SK-N-SH (cell line): ENCODE measurements at regions of chr2 and their contacts with region 1.

Region 1: DNA sequence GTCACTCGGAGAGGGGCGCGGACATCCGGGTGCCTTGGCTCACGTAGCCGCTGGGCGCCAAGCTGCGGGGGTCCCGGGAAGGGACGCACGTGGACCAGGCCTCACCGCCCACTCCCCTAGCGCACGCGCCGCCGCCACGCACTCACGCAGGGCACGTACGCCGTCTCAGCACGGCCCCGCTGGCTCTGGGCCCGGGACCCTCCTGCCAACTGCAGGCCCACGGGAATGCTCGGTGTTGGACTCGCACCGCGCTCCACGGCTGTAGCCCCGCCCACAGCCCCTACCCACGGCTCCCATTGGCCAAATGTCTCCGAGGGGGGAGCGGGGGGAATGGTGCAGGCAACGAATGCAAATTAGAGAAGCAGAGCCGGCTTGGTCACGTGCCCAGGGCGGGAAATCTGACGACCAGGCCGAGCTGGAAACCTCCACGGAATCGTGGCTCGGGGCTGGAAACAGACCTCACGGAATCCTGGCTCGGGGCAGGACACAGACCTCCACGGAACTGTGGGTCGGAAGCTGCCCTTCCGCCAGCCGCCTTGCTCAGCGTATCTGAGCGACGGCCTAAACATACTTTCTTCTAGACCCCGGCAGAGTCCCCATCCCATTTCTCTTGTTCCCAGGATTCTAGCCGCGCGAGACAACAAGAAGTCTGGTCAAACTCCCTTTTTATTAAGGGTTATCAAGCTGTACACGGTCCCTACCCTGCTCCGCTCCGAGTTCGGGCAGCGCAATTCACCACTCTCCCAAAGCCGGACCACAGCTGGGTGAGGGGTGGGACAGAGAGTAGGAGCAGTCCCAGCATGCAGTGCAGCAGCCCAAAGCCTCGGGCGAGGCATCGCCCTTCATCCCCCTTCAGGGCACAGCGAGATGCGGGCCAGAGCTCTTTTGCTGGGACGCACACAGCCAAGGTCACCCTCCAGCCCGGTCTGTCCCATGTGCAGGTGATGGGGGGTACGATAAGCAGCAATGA is at the start of gene ABCB6:
- DNase-seq: peak; percentile 98
- H3K4me3 ChIP-seq: peak within 1 kb of the TSS; percentile 60 to 70
- H3K27ac ChIP-seq: peak within 1 kb of the TSS; percentile 87 to 99
- H3K4me1 ChIP-seq: peaks cover 5 to 30% of the 10 kb centered on the region in 2 experiments; a peak in 3 of 4 replicates
- H3K27me3 ChIP-seq: no peaks in the 10 kb centered on the region
- CTCF ChIP-seq: no peak
- EP300 ChIP-seq: no peak
- RAD21 ChIP-seq: no peak
- polyA plus RNA-seq, gene ABCB6: 26.5 and 27.4 TPM in 2 replicates

Region 2: DNA sequence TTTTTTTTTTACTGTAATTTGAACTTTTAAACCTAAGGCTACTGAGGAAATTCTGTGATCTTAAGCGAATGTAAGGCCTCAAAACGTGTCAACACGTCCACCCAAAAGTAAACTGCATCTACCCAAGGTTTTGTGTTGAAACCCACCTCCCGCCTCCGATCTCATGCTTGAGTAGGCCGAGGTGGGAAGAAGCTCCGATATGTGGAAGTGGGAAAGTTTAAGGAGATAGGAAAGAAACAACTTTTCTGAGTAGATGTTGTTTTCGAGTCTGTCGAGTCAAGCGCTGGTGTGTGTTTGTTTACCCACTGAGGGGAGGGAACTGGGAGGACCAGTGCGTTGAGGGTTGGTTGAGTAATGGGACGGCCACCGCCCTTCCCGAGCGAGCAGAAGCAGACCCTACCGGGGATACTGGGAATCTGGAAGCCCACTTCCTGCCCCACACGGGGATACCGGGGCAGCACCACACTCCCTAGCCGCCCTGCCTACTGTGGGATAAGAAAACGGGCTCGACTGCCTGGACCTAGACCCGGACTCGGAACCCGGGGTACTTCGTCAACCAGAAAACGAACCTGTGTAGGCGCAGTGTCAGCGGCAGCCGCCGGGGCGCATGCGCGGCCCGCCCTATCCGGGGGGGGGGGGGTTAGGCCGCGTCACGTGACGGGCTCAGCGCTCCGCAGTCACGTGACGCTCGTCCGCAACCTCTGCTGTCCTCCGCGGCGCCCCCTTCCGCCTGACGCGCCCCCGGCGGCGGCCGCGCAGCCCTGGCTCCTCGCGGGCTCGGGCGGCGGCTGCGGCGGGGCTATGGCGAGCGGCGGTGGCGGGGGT is 41.3 kb before region 1 on chr2 and contains the start of gene RETREG2:
- CTCF ChIA-PET with region 1: interaction called, 22 read pairs
- POLR2A ChIA-PET with region 1: interaction called, 13 read pairs
- DNase-seq: peak; percentile 99
- H3K4me3 ChIP-seq: peak within 1 kb of the TSS; percentile 80 to 89
- H3K27ac ChIP-seq: peak within 1 kb of the TSS; percentile 95 to 97
- H3K4me1 ChIP-seq: peaks cover 0 to 17% of the 10 kb centered on the region in 2 experiments; a peak in 2 of 4 replicates
- H3K27me3 ChIP-seq: no peaks in the 10 kb centered on the region
- CTCF ChIP-seq: peak; percentile 39
- EP300 ChIP-seq: 0 out of 4 replicates have a peak, but pooled peaks have one; percentile 12 to 21
- RAD21 ChIP-seq: no peak
- polyA plus RNA-seq, gene RETREG2: 74.6 and 94.8 TPM in 2 replicates

Region 3: DNA sequence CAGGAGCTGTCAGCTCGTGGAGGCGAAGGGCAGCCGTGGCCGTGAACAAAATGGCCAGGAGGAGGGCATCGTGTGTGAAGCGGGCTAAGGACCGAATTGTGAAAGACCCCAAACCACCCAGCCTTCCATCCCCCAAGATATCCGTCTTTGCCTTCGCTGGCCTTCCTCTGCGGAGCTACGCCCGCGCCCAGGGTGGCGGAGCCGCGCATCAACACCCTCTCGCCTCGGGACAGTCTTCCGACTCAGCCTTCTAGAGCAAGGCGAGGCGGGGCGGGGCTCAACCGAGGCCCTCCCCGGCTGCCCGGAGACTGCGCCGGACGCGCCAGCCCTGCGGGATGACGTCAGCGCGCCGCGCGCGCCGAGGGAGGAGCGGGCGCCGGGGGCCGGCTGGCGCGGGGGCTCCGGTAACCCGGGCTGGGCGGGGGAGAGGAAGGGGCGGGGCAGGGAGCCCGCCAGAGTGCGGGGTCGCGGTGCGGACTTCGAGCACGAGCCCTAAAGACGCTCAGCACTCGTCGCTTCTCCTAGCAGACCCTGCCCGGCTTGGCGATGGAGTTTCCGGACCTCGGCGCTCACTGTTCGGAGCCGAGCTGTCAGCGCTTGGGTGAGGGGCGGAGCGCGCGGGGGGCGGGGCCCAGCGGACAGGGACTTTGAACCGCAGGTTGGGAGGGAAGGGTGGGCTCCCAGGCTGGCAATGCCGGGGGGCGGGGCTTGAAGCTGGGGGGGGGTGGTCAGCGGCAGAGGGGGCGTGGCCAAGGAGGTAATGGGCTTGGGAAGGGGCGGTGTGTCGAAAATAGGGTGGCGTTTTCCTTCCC is 12.4 kb before region 1 on chr2 and contains the start of gene ZFAND2B:
- CTCF ChIA-PET with region 1: interaction called, 26 read pairs
- POLR2A ChIA-PET with region 1: interaction called, 52 read pairs
- DNase-seq: peak; percentile 99
- H3K4me3 ChIP-seq: peak within 1 kb of the TSS; percentile 69
- H3K27ac ChIP-seq: peak within 1 kb of the TSS; percentile 67 to 93; a peak in 3 of 4 replicates
- H3K4me1 ChIP-seq: peaks cover 13 to 20% of the 10 kb centered on the region in 2 experiments; a peak in 3 of 4 replicates
- H3K27me3 ChIP-seq: no peaks in the 10 kb centered on the region
- CTCF ChIP-seq: no peak
- EP300 ChIP-seq: no peak
- RAD21 ChIP-seq: 0 out of 2 replicates have a peak, but pooled peaks have one; percentile 2
- polyA plus RNA-seq, gene ZFAND2B: 39.9 and 46.9 TPM in 2 replicates

Region 4: DNA sequence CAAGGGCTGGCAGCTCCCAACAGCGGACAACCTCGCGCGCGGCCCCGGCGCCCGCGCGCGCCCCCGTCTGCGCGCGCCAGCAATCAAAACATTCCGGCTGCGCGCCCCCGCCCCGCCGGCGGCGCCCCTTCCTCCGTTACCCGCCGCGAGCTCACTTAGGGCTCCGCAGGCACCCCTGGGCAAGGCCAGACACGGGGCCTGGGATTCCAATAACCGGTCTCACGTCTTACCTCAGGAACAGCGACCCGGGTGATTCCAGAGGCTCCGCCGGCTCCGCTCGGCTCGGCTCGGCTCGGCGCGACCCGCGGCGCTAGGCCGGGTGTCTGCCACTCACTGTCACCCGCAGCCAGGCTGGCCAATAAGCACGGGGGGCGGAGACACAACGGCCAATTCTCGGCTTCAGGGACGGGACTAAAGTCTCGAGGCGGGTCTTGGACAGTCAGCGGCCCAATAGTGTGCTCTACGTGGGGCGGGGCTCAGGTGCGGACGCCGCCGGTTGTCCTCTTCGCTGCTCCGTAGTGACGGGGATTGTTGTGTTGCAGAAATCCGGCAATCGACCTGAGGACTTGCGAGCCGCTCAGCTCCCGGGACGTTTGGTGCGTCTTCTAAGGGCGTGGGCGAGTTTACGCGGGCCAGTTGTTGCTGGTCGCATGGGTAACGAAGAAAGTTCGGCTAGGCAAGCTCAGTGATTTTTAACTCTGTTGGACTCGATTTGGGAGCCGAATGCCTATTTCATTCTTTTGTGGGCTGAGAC is 10.5 kb after region 1 on chr2 and contains the starts of genes ANKZF1 and ATG9A:
- CTCF ChIA-PET with region 1: interaction called, 15 read pairs
- POLR2A ChIA-PET with region 1: interaction called, 19 read pairs
- DNase-seq: peak; percentile 98
- H3K4me3 ChIP-seq: peak within 1 kb of the TSS; percentile 82 to 87
- H3K27ac ChIP-seq: peak within 1 kb of the TSS; percentile 74 to 77
- H3K4me1 ChIP-seq: peaks cover 3 to 16% of the 10 kb centered on the region in 2 experiments; a peak in 1 of 4 replicates
- H3K27me3 ChIP-seq: no peaks in the 10 kb centered on the region
- CTCF ChIP-seq: no peak
- EP300 ChIP-seq: no peak
- RAD21 ChIP-seq: no peak
- polyA plus RNA-seq, gene ANKZF1: 22.3 and 30.8 TPM in 2 replicates
- polyA plus RNA-seq, gene ATG9A: 29.6 and 33.2 TPM in 2 replicates

Region 5: DNA sequence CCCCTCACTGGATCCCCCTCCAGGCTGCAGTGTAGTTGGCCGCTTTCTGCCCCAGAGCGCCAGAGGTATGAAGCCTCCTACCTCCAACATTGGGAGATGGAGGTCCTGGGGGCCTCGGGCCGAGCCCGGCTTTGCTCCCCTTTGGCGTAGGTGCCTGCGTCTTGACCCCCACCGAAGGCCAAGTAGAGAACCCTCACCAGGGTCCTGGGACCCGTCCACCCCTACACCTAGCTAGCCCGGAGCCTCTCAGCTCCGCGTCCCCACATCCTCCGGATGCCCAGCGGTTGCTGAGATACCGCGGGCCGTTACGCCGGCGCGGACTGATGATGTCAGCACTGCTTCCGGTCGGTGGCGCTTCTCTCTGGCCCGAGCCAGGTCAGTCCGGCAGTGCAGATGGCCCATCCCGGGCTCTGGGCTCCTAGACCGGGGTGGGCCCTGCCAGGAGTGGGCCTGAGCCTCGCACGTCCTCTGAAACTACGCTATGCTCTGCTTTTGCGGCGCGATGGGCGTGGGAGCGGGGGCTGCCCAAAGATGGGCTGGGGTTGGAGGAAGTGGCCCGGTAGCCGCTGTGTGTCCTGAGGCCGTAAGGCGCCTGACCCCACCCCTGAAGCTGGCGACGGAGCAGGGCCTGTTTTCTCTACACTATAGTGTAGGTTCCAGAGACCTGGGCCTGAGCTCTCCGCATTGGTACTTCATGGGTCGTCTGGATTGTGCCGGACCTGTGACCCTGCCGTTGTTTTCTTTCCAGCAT is 26.3 kb after region 1 on chr2 and contains the starts of genes GLB1L and STK16:
- CTCF ChIA-PET with region 1: no interaction called
- POLR2A ChIA-PET with region 1: interaction called, 11 read pairs
- DNase-seq: peak; percentile 98
- H3K4me3 ChIP-seq: peak within 1 kb of the TSS; percentile 84 to 97
- H3K27ac ChIP-seq: peak within 1 kb of the TSS; percentile 78 to 92
- H3K4me1 ChIP-seq: peaks cover 15 to 26% of the 10 kb centered on the region in 2 experiments
- H3K27me3 ChIP-seq: no peaks in the 10 kb centered on the region
- CTCF ChIP-seq: no peak
- EP300 ChIP-seq: no peak
- RAD21 ChIP-seq: peak; percentile 3; the same call in 1 of the 2 replicates
- polyA plus RNA-seq, gene GLB1L: 11.7 and 14.1 TPM in 2 replicates
- polyA plus RNA-seq, gene STK16: 57.6 and 78.6 TPM in 2 replicates